ENCODE measurements at regions of chr17 and their contacts with region 1.

Region 1: GRCh38 chr17:74659898-74660297 is 36.4 kb upstream of the CD300E start:
- DNase-seq: no peak
- H3K4me3 Mint-ChIP-seq: no peak overlapping the region
- H3K27ac Mint-ChIP-seq: no peak overlapping the region
- H3K4me1 Mint-ChIP-seq: peaks cover 3% of the 10 kb centered on the region
- H3K27me3 Mint-ChIP-seq: peaks cover 20% of the 10 kb centered on the region

Region 2: GRCh38 chr17:74742153-74742515 is 82.2 kb after region 1 on chr17:
- CTCF ChIA-PET with region 1: interaction called, 102 read pairs
- intact Hi-C with region 1: loop called (anchors 1 kb)
- DNase-seq: peak; percentile 83
- H3K4me3 Mint-ChIP-seq: no peak overlapping the region
- H3K27ac Mint-ChIP-seq: peak overlapping the region; percentile 83
- H3K4me1 Mint-ChIP-seq: peaks cover 77% of the 10 kb centered on the region
- H3K27me3 Mint-ChIP-seq: no peaks in the 10 kb centered on the region

Region 3: GRCh38 chr17:74770498-74771318 is 110.8 kb after region 1 on chr17:
- CTCF ChIA-PET with region 1: interaction called, 13 read pairs
- intact Hi-C with region 1: loop called (anchors 1 kb)
- DNase-seq: peak; percentile 84
- H3K4me3 Mint-ChIP-seq: no peak overlapping the region
- H3K27ac Mint-ChIP-seq: peak overlapping the region; percentile 79
- H3K4me1 Mint-ChIP-seq: peaks cover 32% of the 10 kb centered on the region
- H3K27me3 Mint-ChIP-seq: no peaks in the 10 kb centered on the region

Region 4: DNA sequence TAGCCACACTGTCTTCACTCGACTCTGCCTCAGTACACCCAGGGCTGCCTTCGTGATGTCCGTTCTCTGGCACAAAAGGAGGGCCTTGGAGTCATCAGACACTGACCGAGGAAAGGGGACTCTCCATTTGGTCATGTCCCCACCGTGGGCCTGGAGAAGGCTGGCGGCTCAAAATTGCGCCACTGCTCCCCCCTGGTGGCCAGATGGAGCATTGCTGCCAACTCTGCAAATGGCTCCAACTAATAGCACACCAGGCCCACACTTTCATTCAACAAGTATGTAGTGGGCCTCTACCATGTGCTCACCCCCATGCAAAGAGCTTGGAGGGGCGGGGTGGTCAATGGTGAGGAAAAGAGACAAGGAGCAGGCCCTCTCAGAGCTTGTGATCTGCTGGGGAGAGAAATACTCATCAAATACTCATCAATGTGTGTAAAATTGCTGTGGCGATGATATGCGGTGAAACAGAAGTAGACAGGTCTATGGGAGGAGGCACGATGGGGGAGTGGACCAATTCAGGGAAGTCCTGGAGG is 205.0 kb after region 1 on chr17:
- CTCF ChIA-PET with region 1: interaction called, 12 read pairs
- intact Hi-C with region 1: loop called (anchors 2 kb)
- DNase-seq: peak; percentile 78
- H3K4me3 Mint-ChIP-seq: no peak overlapping the region
- H3K27ac Mint-ChIP-seq: no peak overlapping the region
- H3K4me1 Mint-ChIP-seq: peaks cover 15% of the 10 kb centered on the region
- H3K27me3 Mint-ChIP-seq: peaks cover 18% of the 10 kb centered on the region